K562 (cell line): ENCODE measurements at regions of chr15 and their contacts with region 1.

Region 1: DNA sequence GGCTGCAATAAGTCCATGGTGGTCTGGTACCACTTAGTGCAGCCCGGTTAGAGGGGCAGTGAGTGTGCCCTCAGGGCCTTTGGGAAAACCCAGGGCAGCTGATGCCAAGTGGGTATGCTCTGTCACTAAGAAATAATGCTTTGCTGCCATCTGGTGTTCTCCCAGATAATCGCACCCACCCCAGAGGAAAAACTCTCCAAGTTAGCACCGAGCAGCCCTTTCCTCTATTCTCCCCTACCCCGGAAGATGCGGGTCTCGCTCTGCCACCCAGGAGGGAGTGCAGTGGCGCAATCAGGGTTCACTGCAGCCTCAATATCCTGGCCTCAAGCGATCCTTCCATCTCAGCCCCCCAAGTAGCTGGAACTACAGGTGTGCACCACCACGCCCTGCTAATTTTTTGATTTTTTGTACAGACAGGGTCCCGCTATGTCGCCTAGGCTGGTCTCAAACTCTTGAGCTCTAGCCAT is 21.3 kb upstream of the DAPK2 start:
- DNase-seq: peak; percentile 59 to 71 (median 68)
- ATAC-seq: peak; percentile 81
- H3K4me3 ChIP-seq: no peak overlapping the region
- H3K27ac ChIP-seq: no peak overlapping the region
- H3K4me1 ChIP-seq: peaks cover 3 to 29% of the 10 kb centered on the region in 2 experiments; a peak in 4 of 5 replicates
- H3K27me3 ChIP-seq: no peaks in the 10 kb centered on the region
- CTCF ChIP-seq: peak; percentile 77 to 89 (median 82)
- EP300 ChIP-seq: no peak
- POLR2A ChIP-seq: no peak
- RAD21 ChIP-seq: peak; percentile 82 to 91

Region 2: GRCh38 chr15:63288778-63289378 is 778.7 kb before region 1 on chr15:
- CTCF ChIA-PET with region 1: no interaction called
- POLR2A ChIA-PET with region 1: no interaction called
- in situ Hi-C with region 1: loop called (anchors 25 kb)
- intact Hi-C with region 1: loop called (anchors 5 kb)
- DNase-seq: peak; percentile 29 to 69 (median 53)
- ATAC-seq: peak; percentile 77
- H3K4me3 ChIP-seq: no peak overlapping the region
- H3K27ac ChIP-seq: no peak overlapping the region
- H3K4me1 ChIP-seq: peaks cover 4 to 16% of the 10 kb centered on the region in 2 experiments; a peak in 4 of 5 replicates
- H3K27me3 ChIP-seq: no peaks in the 10 kb centered on the region
- CTCF ChIP-seq: peak; percentile 53 to 94 (median 68); a peak in 5 of 6 replicates
- EP300 ChIP-seq: no peak
- POLR2A ChIP-seq: no peak
- RAD21 ChIP-seq: peak; percentile 98

Region 3: GRCh38 chr15:63599401-63600000 is 468.1 kb before region 1 on chr15:
- CTCF ChIA-PET with region 1: no interaction called
- POLR2A ChIA-PET with region 1: interaction called, 3 read pairs
- in situ Hi-C with region 1: no loop called
- intact Hi-C with region 1: loop called (anchors 5 kb)
- DNase-seq: peak in 1 of 4 experiments; percentile 16
- ATAC-seq: peak; percentile 37; the same call in 2 of the 3 replicates
- H3K4me3 ChIP-seq: no peak overlapping the region
- H3K27ac ChIP-seq: no peak overlapping the region
- H3K4me1 ChIP-seq: peaks cover 0 to 18% of the 10 kb centered on the region in 2 experiments; a peak in 2 of 5 replicates
- H3K27me3 ChIP-seq: no peaks in the 10 kb centered on the region
- CTCF ChIP-seq: peak; percentile 41 to 56 (median 50)
- EP300 ChIP-seq: no peak
- POLR2A ChIP-seq: no peak
- RAD21 ChIP-seq: peak in 1 of 2 experiments; percentile 73; a peak in 2 of 4 replicates

Region 4: DNA sequence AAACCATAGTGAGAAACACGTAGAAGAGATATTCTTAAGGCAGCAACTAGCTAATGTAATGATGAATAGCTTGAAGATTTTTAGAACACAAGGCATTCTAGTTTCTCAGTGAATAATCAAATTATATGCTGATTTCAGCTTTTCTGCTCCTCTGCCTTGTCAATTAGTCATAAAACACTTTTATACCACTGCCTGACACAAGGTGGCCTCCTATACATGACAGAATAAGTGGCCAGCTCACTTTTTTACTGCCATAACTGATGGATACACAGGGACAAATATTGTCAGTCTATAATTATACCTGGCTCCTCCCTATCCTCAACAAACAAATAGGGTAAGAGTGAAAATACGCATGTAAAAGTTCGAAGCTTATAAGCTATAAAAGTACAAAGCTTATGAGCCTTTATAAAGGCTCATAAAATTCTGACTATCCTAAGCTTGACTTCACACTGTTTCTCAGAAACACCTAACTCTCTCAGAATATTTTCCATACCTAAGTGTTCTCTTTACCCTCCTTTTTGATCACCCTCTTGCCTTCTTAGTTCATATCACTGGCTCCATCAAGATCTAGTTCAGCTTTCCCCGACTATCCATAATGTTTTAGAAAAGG is 315.4 kb before region 1 on chr15:
- CTCF ChIA-PET with region 1: interaction called, 12 read pairs
- POLR2A ChIA-PET with region 1: no interaction called
- in situ Hi-C with region 1: no loop called
- intact Hi-C with region 1: loop called (anchors 1 kb)
- DNase-seq: peak; percentile 33 to 72 (median 45)
- ATAC-seq: peak; percentile 92
- H3K4me3 ChIP-seq: no peak overlapping the region
- H3K27ac ChIP-seq: no peak overlapping the region
- H3K4me1 ChIP-seq: no peaks in the 10 kb centered on the region
- H3K27me3 ChIP-seq: no peaks in the 10 kb centered on the region
- CTCF ChIP-seq: peak; percentile 67 to 80 (median 72)
- EP300 ChIP-seq: no peak
- POLR2A ChIP-seq: no peak
- RAD21 ChIP-seq: peak; percentile 77 to 90

Region 5: DNA sequence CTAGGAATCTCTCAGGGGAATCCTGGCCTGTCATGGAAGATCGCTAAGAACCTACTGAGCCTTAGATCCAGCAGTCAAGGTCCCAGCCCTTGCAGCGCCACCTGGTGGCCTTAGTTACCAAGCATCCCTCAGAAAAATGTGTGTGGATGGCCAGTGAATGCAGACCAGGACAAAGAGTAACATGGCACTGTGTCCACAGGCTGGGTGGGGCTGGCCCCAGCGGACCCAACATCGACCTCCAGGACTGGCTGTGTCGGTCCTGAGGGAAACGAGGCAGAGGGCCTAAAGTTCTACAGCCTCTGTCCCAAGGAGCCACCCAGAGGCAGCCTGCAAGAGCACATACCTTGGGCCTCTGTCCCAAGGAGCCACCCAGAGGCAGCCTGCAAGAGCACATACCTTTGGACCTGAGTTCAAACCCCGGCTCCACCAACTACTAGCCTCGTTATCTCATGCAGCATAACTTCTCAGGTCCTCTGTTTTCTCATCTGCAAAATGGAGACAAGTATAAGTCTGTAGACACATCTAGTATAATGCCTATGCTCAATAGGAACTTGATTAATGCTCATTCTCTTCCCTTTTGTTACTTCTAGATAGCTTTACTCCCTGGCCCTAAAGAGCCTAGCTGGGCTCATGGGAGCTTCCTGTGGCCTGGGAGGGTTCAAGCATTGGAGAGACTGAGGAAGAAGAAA is 176.4 kb before region 1 on chr15:
- CTCF ChIA-PET with region 1: no interaction called
- POLR2A ChIA-PET with region 1: no interaction called
- in situ Hi-C with region 1: no loop called
- intact Hi-C with region 1: loop called (anchors 5 kb)
- DNase-seq: peak; percentile 75 to 93 (median 80)
- ATAC-seq: peak; percentile 72
- H3K4me3 ChIP-seq: no peak overlapping the region
- H3K27ac ChIP-seq: peak overlapping the region; percentile 40; the same call in 2 of the 3 replicates
- H3K4me1 ChIP-seq: peaks cover 51 to 57% of the 10 kb centered on the region in 2 experiments
- H3K27me3 ChIP-seq: no peaks in the 10 kb centered on the region
- CTCF ChIP-seq: peak; percentile 82 to 97 (median 85)
- EP300 ChIP-seq: peak; percentile 7; the same call in 1 of the 2 replicates
- POLR2A ChIP-seq: no peak
- RAD21 ChIP-seq: peak; percentile 87 to 93

Region 6: GRCh38 chr15:64153480-64154367 is 86.1 kb after region 1 on chr15:
- CTCF ChIA-PET with region 1: no interaction called
- POLR2A ChIA-PET with region 1: interaction called, 5 read pairs
- in situ Hi-C with region 1: no loop called
- intact Hi-C with region 1: loop called (anchors 2 kb)
- DNase-seq: peak; percentile 78 to 93 (median 84)
- ATAC-seq: peak; percentile 88
- H3K4me3 ChIP-seq: no peak overlapping the region
- H3K27ac ChIP-seq: peak overlapping the region; percentile 45; the same call in 2 of the 3 replicates
- H3K4me1 ChIP-seq: peaks cover 16 to 58% of the 10 kb centered on the region in 2 experiments; a peak in 4 of 5 replicates
- H3K27me3 ChIP-seq: no peaks in the 10 kb centered on the region
- CTCF ChIP-seq: peak; percentile 94 to 97 (median 96)
- EP300 ChIP-seq: no peak
- POLR2A ChIP-seq: peak; percentile 77
- RAD21 ChIP-seq: peak; percentile 67 to 90

Region 7: GRCh38 chr15:65336493-65337455 is 1269.2 kb after region 1 on chr15:
- CTCF ChIA-PET with region 1: no interaction called
- POLR2A ChIA-PET with region 1: no interaction called
- in situ Hi-C with region 1: no loop called
- intact Hi-C with region 1: no loop called
- DNase-seq: no peak
- ATAC-seq: peak; percentile 33; the same call in 2 of the 3 replicates
- H3K4me3 ChIP-seq: no peak overlapping the region
- H3K27ac ChIP-seq: no peak overlapping the region
- H3K4me1 ChIP-seq: peaks cover 5 to 26% of the 10 kb centered on the region in 2 experiments
- H3K27me3 ChIP-seq: peaks cover 35 to 65% of the 10 kb centered on the region in 2 experiments; a peak in 4 of 5 replicates
- CTCF ChIP-seq: peak in 1 of 3 experiments; percentile 13; a peak in 1 of 6 replicates
- EP300 ChIP-seq: no peak
- POLR2A ChIP-seq: no peak
- RAD21 ChIP-seq: no peak